ENCODE measurements at regions of chr3 and their contacts with region 1.

Region 1: DNA sequence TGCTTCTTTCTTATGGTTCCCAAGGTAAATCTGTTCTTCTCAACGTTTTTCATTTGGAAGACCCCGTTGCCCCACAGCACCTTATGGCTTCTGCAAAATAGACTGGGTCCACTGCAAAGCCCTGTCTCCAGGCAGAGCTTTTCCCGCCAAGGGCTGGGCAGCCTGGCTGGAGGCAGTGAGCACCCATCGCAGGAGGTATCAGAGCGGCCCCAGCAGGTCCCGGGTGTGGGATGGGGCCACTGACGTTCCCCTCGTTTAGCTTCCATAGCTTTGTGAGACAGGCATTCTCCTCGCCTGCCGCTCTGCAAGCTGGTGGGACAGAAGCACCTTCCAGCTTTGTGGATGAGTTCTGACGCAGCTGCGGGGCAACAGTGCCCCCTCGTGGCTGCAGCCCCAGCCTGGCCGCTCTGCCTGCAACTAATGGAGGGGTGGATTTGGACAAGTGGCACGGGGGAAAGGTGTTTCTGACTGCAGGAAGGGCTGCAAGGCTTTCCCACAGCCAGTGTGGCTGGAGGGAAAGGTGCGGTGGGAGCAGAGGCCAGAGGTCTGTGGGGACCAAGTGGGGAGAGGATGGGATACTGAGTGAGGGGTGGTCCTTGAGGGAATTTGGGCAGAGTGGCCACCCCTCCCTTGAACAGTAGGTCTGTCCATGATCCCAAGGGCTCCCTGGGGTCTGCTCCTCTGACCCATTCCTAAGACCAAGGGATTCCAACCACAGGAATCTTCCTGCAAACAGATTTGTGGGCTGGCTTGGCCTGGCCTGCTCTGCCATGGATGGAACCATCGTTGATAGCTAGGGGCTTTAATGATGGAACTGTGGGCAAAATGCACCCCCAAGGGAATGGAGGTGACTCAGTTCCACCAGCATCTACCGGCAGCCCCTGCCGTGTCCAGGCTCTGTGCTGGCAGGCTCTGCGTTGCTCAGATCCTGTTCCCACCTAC is 99.4 kb downstream of the FBLN2 start:
- H3K4me3 ChIP-seq: no peak overlapping the region
- H3K27ac ChIP-seq: no peak overlapping the region
- H3K4me1 ChIP-seq: no peaks in the 10 kb centered on the region
- CTCF ChIP-seq: peak; percentile 98

Region 2: GRCh38 chr3:13091898-13092611 is 556.3 kb before region 1 on chr3:
- CTCF ChIA-PET with region 1: interaction called, 29 read pairs
- POLR2A ChIA-PET with region 1: no interaction called
- H3K4me3 ChIP-seq: no peak overlapping the region
- H3K27ac ChIP-seq: no peak overlapping the region
- H3K4me1 ChIP-seq: no peaks in the 10 kb centered on the region
- CTCF ChIP-seq: peak; percentile 67

Region 3: DNA sequence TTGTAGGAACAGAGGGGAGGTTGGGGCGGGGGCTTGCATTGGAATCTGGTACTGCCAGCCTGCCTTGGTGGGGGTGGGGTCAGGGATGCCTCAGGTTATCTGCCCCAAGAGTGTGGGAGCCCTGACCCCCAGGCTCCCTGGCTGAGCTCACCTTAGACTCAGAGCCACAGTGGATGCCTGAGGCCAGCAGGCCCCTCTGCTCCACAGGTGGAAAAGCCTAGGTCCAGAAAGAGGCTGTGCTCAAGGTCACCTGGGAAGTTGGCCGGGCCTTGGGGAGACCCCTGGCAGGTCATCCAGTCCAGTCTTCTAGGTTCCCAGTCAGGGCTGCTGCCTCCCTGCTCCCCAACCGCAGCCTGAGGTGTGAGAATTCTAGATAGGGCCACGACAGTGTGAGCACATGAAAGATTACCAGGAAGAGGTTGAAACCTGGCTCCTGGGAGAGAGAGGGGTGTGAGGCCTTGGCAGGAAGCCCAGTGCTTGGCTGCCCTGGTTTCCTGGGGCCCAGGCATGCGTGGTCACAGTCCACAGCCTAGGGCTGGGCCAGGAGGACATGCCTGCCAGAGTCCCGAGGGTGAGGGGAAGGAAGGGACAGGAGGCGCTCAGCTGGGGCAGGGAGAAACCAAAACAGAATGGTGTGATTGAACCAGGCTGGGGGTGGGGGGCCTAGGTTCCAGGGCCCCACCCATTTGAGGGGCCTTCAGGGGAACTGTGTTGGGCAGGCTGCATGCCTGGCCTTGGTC is 163.3 kb before region 1 on chr3:
- CTCF ChIA-PET with region 1: interaction called, 17 read pairs
- POLR2A ChIA-PET with region 1: no interaction called
- H3K4me3 ChIP-seq: no peak overlapping the region
- H3K27ac ChIP-seq: no peak overlapping the region
- H3K4me1 ChIP-seq: peaks cover 5% of the 10 kb centered on the region
- CTCF ChIP-seq: no peak

Region 4: DNA sequence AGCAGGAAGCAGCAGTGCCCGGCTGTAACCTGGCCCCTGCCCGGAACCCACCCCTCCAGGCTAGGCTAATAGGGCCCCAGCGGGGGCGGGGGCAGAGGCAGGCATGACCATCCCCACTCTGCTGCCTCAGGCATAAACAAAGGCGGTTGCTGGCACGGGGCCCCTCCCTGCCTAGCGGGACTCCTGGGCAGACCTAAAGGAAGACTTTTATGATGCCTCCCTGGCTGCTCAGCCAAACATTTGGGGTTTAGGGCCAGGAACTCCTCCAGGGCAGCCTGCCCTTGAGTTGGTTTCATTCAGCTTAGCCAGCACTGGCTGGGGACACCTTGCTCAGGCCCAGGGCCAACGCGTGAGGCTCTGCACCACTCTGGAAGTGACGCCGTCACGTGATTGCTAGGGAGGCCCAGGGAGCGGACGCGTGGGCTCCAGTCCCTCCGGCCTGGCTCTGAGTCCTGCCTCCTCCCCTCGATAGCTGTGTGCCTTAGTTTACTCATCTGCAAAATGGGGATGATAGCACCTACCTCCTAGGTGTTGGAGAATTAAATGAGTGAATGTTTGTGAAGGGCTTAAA is 140.5 kb before region 1 on chr3:
- CTCF ChIA-PET with region 1: interaction called, 181 read pairs
- POLR2A ChIA-PET with region 1: no interaction called
- H3K4me3 ChIP-seq: no peak overlapping the region
- H3K27ac ChIP-seq: no peak overlapping the region; the same call in 1 of the 2 replicates
- H3K4me1 ChIP-seq: peaks cover 6% of the 10 kb centered on the region; the same call in 1 of the 2 replicates
- CTCF ChIP-seq: no peak

Region 5: GRCh38 chr3:13884851-13885703 is 236.7 kb after region 1 on chr3:
- CTCF ChIA-PET with region 1: interaction called, 589 read pairs
- POLR2A ChIA-PET with region 1: no interaction called
- H3K4me3 ChIP-seq: no peak overlapping the region
- H3K27ac ChIP-seq: no peak overlapping the region
- H3K4me1 ChIP-seq: peaks cover 3% of the 10 kb centered on the region; the same call in 1 of the 2 replicates
- CTCF ChIP-seq: peak; percentile 24; the same call in 1 of the 2 replicates

Measured in HEK293 (cell line).